ENCODE measurements at regions of chr4 and their contacts with region 1.

Region 1: DNA sequence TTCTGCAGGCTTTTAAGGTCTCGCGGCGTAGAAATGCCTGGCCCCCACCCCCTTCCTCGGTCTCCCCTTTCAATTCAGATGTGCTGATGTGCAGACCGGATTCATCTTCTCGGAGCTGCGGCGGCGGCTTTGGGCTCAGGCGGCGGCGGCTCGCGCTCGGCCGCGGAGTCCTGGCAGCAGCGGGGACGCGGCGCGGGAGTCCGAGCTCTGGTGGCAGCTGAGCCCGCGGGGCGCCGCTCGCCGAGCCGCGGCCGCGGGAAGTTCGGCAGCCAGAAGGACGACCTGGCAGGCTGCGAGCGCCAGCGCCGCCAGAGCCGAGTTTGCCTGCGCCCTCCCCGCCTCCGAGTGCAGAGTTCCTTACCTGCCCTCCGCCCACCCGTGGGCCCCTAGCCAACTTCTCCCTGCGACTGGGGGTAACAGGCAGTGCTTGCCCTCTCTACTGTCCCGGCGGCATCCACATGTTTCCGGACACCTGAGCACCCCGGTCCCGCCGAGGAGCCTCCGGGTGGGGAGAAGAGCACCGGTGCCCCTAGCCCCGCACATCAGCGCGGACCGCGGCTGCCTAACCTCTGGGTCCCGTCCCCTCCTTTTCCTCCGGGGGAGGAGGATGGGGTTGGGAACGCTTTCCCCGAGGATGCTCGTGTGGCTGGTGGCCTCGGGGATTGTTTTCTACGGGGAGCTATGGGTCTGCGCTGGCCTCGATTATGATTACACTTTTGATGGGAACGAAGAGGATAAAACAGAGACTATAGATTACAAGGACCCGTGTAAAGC is 448 bp downstream of the TLL1 start:
- DNase-seq: peak; percentile 69
- H3K4me3 ChIP-seq: peak overlapping the region; percentile 38 to 67 (median 58)
- H3K27ac ChIP-seq: peak overlapping the region; percentile 13 to 77 (median 60)
- H3K4me1 ChIP-seq: peaks cover 0 to 25% (median 20%) of the 10 kb centered on the region in 4 donors
- H3K27me3 ChIP-seq: peaks cover 0 to 28% (median 0%) of the 10 kb centered on the region in 3 donors
- CTCF ChIP-seq: no peak
- EP300 ChIP-seq: no peak
- POLR2A ChIP-seq: no peak

Region 2: GRCh38 chr4:165493359-165493758 is 380.1 kb before region 1 on chr4:
- intact Hi-C with region 1: loop called (anchors 10 kb)
- DNase-seq: peak; percentile 85
- H3K4me3 ChIP-seq: peak overlapping the region in 1 of 4 donors; percentile 29
- H3K27ac ChIP-seq: no peak overlapping the region
- H3K4me1 ChIP-seq: peaks cover 0 to 3% (median 0%) of the 10 kb centered on the region in 4 donors
- H3K27me3 ChIP-seq: no peaks in the 10 kb centered on the region
- CTCF ChIP-seq: peak; percentile 19 to 74 (median 46)
- EP300 ChIP-seq: no peak
- POLR2A ChIP-seq: no peak

Region 3: DNA sequence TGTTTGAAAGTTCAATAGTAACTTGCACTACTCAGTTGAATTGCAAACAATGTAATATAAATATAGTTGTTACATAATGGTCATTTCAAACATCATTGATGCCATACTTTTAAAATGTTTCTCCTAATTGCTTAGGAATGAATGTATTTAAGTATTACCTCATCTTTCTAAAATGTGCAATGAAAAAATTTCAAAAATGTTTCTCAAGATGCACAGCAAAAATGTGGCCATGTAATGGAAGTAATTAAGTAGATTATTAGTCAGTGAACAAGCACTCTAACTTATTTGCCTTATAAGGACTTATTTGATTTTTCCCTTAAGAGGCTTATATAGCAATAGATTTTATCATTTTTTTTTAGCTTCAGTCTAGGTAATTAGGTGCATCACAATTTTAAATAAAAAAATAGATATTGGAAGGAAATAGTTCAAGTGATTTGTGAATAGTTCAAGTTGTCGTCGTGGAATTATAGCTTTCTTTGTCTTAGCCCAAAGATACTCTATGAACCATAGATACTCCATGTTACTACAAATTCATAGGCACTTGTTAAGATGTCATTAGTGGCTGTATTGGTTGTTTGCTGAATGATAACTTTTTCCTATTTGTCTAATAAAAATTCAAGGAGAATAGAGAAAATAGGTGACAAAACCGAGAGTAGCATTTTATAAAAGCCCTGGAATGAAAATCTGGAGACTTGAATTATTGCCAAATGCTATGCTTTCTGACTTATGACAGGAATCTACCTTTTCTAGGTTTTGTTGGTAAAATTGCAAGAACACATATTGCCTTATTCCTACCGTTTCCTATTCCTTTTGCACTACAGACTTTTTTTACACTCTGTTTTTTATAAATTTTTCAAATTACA is 118.1 kb after region 1 on chr4:
- intact Hi-C with region 1: no loop called
- DNase-seq: no peak
- H3K4me3 ChIP-seq: no peak overlapping the region
- H3K27ac ChIP-seq: no peak overlapping the region
- H3K4me1 ChIP-seq: no peaks in the 10 kb centered on the region
- H3K27me3 ChIP-seq: no peaks in the 10 kb centered on the region
- CTCF ChIP-seq: no peak
- EP300 ChIP-seq: no peak
- POLR2A ChIP-seq: no peak

Region 4: DNA sequence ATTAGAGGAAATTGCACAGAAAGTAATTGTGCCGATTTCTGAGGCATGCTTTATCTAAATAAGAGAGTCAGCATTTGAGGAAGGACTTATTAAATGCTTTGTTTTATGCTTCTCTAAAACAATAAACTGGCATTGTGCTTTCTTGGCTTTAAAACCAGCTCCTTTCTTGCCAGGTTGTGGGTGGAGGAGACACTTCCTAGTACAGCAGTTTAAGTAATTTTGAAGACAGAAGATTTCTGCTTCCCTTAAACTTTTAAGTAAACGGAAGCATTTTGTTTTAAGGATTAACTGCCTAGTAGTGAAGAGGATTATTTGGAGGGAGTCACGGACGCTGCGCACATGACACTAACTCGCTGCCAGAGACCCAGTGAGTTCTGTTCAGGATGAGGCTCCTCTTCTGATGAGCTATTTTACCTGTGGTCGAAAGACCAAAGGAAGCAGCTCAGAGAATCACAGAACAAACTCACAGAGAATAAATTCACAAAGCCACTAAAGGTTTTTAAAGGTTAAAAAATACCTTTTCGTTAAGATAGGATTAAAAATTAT is 169.1 kb after region 1 on chr4:
- intact Hi-C with region 1: loop called (anchors 5 kb)
- DNase-seq: no peak
- H3K4me3 ChIP-seq: peak overlapping the region in 3 of 4 donors; percentile 28 to 32 (median 31)
- H3K27ac ChIP-seq: peak overlapping the region; percentile 54 to 65 (median 61)
- H3K4me1 ChIP-seq: peaks cover 0 to 21% (median 8%) of the 10 kb centered on the region in 4 donors
- H3K27me3 ChIP-seq: no peaks in the 10 kb centered on the region
- CTCF ChIP-seq: no peak
- EP300 ChIP-seq: no peak
- POLR2A ChIP-seq: no peak

Region 5: GRCh38 chr4:166064721-166065120 is 191.2 kb after region 1 on chr4:
- intact Hi-C with region 1: no loop called
- DNase-seq: no peak
- H3K4me3 ChIP-seq: no peak overlapping the region
- H3K27ac ChIP-seq: no peak overlapping the region
- H3K4me1 ChIP-seq: no peaks in the 10 kb centered on the region
- H3K27me3 ChIP-seq: no peaks in the 10 kb centered on the region
- CTCF ChIP-seq: no peak
- EP300 ChIP-seq: no peak
- POLR2A ChIP-seq: no peak

Region 6: GRCh38 chr4:166091912-166092510 is 218.5 kb after region 1 on chr4:
- intact Hi-C with region 1: loop called (anchors 10 kb)
- DNase-seq: no peak
- H3K4me3 ChIP-seq: no peak overlapping the region
- H3K27ac ChIP-seq: no peak overlapping the region
- H3K4me1 ChIP-seq: no peaks in the 10 kb centered on the region
- H3K27me3 ChIP-seq: no peaks in the 10 kb centered on the region
- CTCF ChIP-seq: peak; percentile 56 to 66 (median 60)
- EP300 ChIP-seq: no peak
- POLR2A ChIP-seq: no peak